ENCODE measurements at regions of chr7 and their contacts with region 1.

Region 1: GRCh38 chr7:105808703-105809590 is 67.5 kb downstream of the ATXN7L1 start:
- DNase-seq: peak; percentile 94
- ATAC-seq: peak; percentile 82
- H3K4me3 Mint-ChIP-seq: peak overlapping the region; percentile 16
- H3K27ac Mint-ChIP-seq: peak overlapping the region; percentile 71
- H3K4me1 Mint-ChIP-seq: peaks cover 59% of the 10 kb centered on the region
- H3K27me3 Mint-ChIP-seq: peaks cover 8% of the 10 kb centered on the region

Region 2: DNA sequence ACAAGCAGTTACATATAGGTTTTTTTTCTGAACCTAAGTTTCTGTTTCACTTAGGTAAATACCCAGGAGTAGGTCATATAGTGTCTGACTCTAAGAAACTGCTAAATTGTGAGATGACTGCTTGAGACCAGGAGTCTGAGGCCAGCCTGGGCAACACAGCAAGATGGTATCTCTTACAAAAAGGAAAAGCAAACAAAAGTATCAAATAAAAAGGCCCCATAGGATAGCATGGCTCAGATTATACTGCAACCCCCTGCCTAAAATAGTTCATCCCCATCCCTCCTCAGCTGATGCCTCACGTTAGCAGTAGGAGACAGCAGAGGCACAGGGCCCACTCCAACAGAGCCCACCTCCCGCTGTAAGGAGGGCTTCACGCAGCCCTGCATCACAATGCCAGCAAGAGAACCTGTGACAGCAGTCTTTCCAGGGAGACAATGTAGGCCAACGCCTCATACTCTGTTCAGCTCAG is 510.5 kb before region 1 on chr7:
- CTCF ChIA-PET with region 1: no interaction called
- POLR2A ChIA-PET with region 1: no interaction called
- intact Hi-C with region 1: loop called in 1 of 2 experiments (anchors 10 kb)
- DNase-seq: peak; percentile 65
- ATAC-seq: peak; percentile 92
- H3K4me3 Mint-ChIP-seq: peak overlapping the region; percentile 53
- H3K27ac Mint-ChIP-seq: peak overlapping the region; percentile 90
- H3K4me1 Mint-ChIP-seq: peaks cover 58% of the 10 kb centered on the region
- H3K27me3 Mint-ChIP-seq: no peaks in the 10 kb centered on the region

Region 3: DNA sequence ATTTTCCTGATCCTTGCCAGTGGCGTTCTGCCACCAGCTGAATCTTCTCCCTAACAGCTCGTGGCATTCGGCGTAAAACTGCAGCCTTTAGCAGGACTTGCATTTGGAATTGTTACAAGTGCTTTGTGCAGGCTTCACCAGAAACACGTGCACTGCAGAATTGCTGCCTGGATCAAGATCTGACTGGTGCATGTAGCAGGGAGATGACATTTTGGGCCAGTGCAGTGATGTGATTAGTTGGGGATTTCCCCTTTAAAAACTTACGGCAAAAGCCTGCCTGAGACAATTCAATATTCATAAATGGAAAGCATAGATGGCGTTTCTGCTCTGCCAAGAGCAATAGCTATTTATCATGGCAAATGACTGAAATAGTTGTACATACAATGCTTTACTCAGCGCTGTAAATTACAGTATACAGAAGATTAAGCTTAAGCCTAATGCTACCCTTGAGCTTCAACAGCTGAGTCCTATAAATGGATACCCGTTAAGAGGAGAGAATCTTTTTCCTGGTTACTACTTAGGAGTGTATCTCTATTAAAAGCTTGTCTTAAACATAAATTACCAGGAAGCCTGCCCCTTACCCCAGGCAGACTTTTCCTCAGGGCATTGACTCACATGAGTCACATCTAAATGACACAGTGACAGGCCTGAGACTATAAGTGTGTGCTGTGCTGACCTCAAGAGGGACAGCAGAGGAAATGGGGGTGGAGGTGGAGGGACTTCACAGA is 38.9 kb before region 1 on chr7:
- CTCF ChIA-PET with region 1: interaction called, 6 read pairs
- POLR2A ChIA-PET with region 1: no interaction called
- intact Hi-C with region 1: loop called (anchors 1 kb)
- DNase-seq: peak; percentile 53
- ATAC-seq: peak; percentile 70
- H3K4me3 Mint-ChIP-seq: no peak overlapping the region
- H3K27ac Mint-ChIP-seq: no peak overlapping the region
- H3K4me1 Mint-ChIP-seq: peaks cover 40% of the 10 kb centered on the region
- H3K27me3 Mint-ChIP-seq: no peaks in the 10 kb centered on the region

Region 4: GRCh38 chr7:105885387-105886111 is 76.6 kb after region 1 on chr7:
- CTCF ChIA-PET with region 1: interaction called, 4 read pairs
- POLR2A ChIA-PET with region 1: no interaction called
- intact Hi-C with region 1: loop called (anchors 1 kb)
- DNase-seq: peak; percentile 21
- ATAC-seq: no peak
- H3K4me3 Mint-ChIP-seq: no peak overlapping the region
- H3K27ac Mint-ChIP-seq: no peak overlapping the region
- H3K4me1 Mint-ChIP-seq: peaks cover 28% of the 10 kb centered on the region
- H3K27me3 Mint-ChIP-seq: no peaks in the 10 kb centered on the region

Region 5: DNA sequence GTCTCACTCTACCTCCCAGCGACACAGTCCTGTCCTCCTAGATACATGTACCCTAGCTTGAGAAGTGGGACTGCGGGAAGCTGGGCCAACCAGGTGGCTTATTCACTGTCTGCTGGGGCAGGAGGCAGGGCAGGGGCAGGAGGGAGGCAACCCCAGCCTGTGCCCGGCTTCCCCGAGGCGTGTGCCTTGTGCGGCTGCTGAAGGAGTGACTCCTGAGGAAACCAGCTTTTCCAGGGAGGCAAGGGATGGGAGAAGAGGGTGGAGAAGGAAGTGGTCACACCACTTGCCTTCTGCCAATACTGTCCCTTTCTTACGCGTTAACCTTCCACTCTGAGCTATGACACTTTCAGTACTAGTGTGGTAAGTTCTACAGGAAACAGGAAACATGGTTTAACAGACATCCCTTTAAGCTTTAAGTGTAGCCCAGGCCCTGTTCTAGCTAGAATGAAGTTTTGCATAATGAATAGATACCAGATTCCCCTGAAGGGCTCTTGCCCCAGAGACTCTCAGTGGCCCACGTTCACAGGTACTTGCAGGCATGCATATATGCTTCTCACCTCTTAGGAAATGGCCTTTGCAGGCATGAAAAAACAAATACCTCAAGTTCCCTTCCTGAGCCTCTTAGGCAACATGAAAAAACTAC is 262.5 kb after region 1 on chr7:
- CTCF ChIA-PET with region 1: no interaction called
- POLR2A ChIA-PET with region 1: no interaction called
- intact Hi-C with region 1: loop called in 1 of 2 experiments (anchors 1 kb)
- DNase-seq: peak; percentile 71
- ATAC-seq: peak; percentile 98
- H3K4me3 Mint-ChIP-seq: peak overlapping the region; percentile 60
- H3K27ac Mint-ChIP-seq: peak overlapping the region; percentile 95
- H3K4me1 Mint-ChIP-seq: peaks cover 35% of the 10 kb centered on the region
- H3K27me3 Mint-ChIP-seq: no peaks in the 10 kb centered on the region

Region 6: DNA sequence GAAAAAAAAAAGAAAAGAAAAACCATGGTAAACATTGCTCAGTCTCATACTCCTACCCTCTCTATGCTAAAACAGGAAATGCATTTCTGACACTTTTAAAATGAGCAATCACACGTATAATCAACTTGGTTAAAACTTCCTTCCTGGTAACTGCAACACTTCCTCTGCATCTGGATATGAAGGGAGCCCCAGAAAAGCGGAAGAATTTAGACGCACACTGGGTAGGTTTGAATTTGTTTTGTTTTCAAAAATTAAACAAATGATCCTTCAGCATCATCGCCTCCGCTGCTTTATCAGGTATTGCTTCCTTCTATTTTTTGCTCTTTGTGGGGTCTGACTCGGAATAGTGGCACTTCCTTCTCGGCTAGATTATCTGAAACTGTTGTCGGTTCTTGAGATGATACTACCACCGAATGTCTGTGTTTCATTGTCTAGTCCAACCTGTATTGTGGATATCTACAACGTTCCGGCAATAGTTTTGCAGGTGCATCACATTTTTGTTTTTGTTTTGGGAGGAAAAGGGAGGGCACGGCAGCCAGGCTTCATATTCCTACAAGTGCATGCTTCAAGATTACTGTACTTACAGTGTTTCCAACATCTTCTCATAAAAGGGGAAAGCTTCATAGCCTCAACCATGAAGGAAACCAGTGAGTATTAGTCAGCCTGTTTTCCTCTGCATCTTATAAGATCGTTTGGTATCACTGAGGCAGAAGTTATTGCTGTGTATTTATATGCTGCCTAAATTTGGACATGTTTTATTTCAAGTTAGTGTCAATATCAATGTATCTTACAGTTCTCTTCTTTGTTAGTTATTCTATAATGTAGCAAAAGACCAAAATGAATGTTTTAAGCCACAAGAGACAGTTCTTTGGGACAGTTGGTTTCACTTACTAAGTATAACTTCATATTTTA is 1056.4 kb after region 1 on chr7 and contains the start of gene PIK3CG:
- CTCF ChIA-PET with region 1: no interaction called
- POLR2A ChIA-PET with region 1: no interaction called
- intact Hi-C with region 1: loop called in 1 of 2 experiments (anchors 5 kb)
- DNase-seq: no peak
- ATAC-seq: peak; percentile 79
- H3K4me3 Mint-ChIP-seq: peak within 1 kb of the TSS; percentile 83
- H3K27ac Mint-ChIP-seq: peak within 1 kb of the TSS; percentile 92
- H3K4me1 Mint-ChIP-seq: peaks cover 75% of the 10 kb centered on the region
- H3K27me3 Mint-ChIP-seq: no peaks in the 10 kb centered on the region
- total RNA-seq, gene PIK3CG: 9.9 to 14.3 TPM